Ovary (tissue), 10 donors: ENCODE measurements at regions of chr13 and their contacts with region 1.

Region 1: GRCh38 chr13:31060655-31061054 is 101.0 kb downstream of the HSPH1 start:
- DNase-seq: no peak
- H3K4me3 ChIP-seq: no peak overlapping the region
- H3K27ac ChIP-seq: no peak overlapping the region
- H3K4me1 ChIP-seq: peaks cover 1% of the 10 kb centered on the region
- H3K27me3 ChIP-seq: no peaks in the 10 kb centered on the region
- CTCF ChIP-seq: no peak
- EP300 ChIP-seq: no peak
- POLR2A ChIP-seq: no peak

Region 2: DNA sequence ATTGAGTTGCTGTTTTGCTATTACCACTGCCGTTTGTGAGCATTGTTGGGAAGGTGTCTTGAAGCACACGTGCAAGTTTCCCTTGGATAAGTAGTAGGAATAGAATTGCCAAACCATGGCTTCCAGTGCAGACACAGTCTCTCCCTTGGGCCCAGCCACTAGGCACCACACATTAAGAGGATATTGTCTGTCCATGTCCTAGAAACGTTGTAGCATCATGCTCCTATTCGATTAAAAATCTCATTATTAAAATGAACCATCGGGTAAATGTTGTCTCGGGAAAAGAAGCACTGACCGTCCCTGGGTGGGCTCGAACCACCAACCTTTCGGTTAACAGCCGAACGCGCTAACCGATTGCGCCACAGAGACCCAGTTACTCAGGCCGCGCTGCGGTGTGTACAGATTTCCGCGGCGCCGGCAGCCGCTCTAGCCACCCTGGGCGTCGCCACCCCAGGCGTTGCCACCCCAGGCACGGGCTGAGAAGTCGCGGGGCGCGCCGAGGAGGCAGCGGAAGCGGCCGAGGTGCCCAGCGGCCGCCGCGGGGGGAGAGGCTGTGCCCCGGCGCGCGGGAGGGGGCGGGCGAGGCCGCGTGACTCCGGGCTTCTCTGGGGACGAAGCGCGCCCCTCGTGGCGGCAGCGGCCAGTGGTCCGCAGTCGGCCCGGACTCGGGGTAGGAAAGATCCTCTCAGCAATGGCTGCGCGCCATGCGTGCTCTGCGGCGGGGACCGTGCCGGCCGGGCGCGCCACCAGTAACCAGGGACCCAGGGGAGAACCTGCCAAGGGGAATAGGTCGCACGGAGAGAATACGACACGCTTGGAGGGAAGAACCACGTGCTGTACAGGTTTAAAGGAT is 386.8 kb before region 1 on chr13:
- intact Hi-C with region 1: no loop called
- DNase-seq: peak; percentile 82 to 90 (median 85)
- H3K4me3 ChIP-seq: peak overlapping the region; percentile 45
- H3K27ac ChIP-seq: peak overlapping the region; percentile 62 to 81
- H3K4me1 ChIP-seq: peaks cover 2% of the 10 kb centered on the region
- H3K27me3 ChIP-seq: no peaks in the 10 kb centered on the region
- CTCF ChIP-seq: peak; percentile 40 to 84 (median 77)
- EP300 ChIP-seq: no peak
- POLR2A ChIP-seq: no peak

Region 3: GRCh38 chr13:31012655-31013024 is 48.0 kb before region 1 on chr13:
- intact Hi-C with region 1: no loop called
- DNase-seq: no peak
- H3K4me3 ChIP-seq: no peak overlapping the region
- H3K27ac ChIP-seq: no peak overlapping the region
- H3K4me1 ChIP-seq: no peaks in the 10 kb centered on the region
- H3K27me3 ChIP-seq: no peaks in the 10 kb centered on the region
- CTCF ChIP-seq: peak in 1 of 3 donors; percentile 38
- EP300 ChIP-seq: no peak
- POLR2A ChIP-seq: no peak

Region 4: DNA sequence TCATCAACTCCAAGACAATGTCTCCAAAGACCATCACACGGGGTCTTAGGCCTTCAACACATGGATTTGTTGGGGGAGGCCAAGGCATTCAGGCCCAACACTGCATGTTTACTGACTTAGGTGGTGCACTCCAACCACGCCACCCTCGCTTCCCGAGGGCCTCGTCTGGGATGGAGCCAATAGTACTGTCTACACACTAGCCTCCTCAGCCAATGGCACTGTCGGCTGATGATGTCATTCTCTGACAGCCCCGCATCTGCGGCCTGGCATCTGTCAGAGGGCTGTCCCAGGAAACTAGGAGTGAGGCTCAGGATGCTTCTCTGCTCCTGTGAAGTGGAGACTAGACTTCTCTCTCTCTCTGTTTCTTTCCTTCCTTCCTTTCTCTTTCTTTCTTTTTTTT is 31.6 kb before region 1 on chr13:
- intact Hi-C with region 1: loop called in 1 of 4 experiments (anchors 1 kb)
- DNase-seq: no peak
- H3K4me3 ChIP-seq: no peak overlapping the region
- H3K27ac ChIP-seq: no peak overlapping the region
- H3K4me1 ChIP-seq: no peaks in the 10 kb centered on the region
- H3K27me3 ChIP-seq: no peaks in the 10 kb centered on the region
- CTCF ChIP-seq: no peak
- EP300 ChIP-seq: no peak
- POLR2A ChIP-seq: no peak

Region 5: DNA sequence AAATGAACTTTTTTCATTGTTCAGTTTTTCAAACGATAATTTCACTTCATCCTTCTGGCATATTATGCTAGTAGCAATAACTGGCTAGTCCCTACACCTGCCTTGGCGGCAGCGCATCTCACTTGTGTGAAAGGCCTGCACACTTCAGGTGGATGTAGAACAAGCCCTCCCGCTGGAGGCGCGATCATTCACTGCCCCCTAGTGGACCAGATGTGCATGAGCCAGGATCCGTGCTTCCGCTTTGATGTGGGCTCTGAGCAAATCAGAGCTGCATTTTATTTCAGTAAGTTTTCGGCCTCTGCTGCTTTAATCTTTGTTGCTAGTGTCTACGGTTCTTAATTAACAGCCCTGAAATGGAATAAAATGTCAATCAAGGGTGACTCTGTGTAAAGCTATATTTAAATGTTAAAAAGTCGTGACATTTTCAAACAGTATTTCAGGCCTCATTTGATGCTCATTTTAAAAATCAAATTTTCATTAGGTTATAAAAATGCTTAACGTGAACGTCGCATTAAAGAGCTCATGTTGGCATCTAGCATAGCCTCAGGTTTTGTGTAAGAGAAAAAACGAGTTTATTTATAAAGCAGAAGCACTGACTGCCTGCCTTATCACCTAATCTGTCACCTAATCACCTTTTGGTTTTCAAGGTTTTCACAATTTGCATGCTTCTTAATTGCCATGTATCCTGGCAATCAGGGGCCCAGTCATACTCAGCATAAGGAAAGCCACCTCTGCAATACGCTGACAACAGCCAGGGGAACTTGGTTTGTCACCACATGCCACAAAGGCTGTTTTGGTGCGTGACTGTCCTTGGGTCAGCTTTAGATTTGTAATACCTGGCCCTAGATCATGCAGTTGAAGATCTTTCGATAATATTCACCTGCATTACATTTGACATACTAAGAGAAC is 16.0 kb before region 1 on chr13:
- intact Hi-C with region 1: no loop called
- DNase-seq: peak; percentile 68 to 85 (median 81)
- H3K4me3 ChIP-seq: no peak overlapping the region
- H3K27ac ChIP-seq: no peak overlapping the region
- H3K4me1 ChIP-seq: peaks cover 4% of the 10 kb centered on the region
- H3K27me3 ChIP-seq: no peaks in the 10 kb centered on the region
- CTCF ChIP-seq: peak; percentile 60 to 82 (median 74)
- EP300 ChIP-seq: no peak
- POLR2A ChIP-seq: no peak

Region 6: GRCh38 chr13:31096654-31097302 is 36.1 kb after region 1 on chr13:
- intact Hi-C with region 1: no loop called
- DNase-seq: no peak
- H3K4me3 ChIP-seq: no peak overlapping the region
- H3K27ac ChIP-seq: no peak overlapping the region
- H3K4me1 ChIP-seq: no peaks in the 10 kb centered on the region
- H3K27me3 ChIP-seq: no peaks in the 10 kb centered on the region
- CTCF ChIP-seq: no peak
- EP300 ChIP-seq: no peak
- POLR2A ChIP-seq: no peak